ENCODE measurements at regions of chr16 and their contacts with region 1.

Region 1: DNA sequence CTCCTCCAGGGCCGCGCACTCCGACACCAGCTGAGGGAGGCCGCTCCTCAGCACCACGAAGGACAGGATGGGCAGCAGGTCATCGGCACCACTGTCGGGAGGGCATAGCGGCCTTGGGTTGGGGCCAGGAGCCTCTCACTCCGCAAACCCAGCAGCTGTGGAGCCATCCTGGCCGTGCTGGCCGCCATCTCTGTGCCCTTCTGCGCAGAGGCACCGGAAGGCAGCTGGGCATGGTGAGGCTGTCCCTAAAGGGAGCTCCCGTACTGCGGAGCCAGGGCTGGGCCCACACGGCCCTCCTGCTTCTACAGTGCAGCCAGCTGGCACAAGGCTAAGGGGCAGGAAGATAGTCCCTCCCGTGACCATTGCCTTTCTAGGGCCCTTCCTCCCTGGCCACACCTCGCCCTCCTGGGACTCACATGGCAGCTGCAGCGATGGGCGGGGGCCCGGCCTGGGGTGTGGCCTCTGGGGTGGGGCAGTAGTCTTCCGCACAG is 7.0 kb upstream of the SPATA2L start:
- DNase-seq: no peak
- H3K4me3 ChIP-seq: no peak overlapping the region
- H3K27ac ChIP-seq: no peak overlapping the region
- H3K4me1 ChIP-seq: peaks cover 13 to 31% (median 21%) of the 10 kb centered on the region in 4 donors
- H3K27me3 ChIP-seq: peaks cover 0 to 21% (median 7%) of the 10 kb centered on the region in 3 donors
- CTCF ChIP-seq: no peak
- EP300 ChIP-seq: no peak
- POLR2A ChIP-seq: no peak

Region 2: DNA sequence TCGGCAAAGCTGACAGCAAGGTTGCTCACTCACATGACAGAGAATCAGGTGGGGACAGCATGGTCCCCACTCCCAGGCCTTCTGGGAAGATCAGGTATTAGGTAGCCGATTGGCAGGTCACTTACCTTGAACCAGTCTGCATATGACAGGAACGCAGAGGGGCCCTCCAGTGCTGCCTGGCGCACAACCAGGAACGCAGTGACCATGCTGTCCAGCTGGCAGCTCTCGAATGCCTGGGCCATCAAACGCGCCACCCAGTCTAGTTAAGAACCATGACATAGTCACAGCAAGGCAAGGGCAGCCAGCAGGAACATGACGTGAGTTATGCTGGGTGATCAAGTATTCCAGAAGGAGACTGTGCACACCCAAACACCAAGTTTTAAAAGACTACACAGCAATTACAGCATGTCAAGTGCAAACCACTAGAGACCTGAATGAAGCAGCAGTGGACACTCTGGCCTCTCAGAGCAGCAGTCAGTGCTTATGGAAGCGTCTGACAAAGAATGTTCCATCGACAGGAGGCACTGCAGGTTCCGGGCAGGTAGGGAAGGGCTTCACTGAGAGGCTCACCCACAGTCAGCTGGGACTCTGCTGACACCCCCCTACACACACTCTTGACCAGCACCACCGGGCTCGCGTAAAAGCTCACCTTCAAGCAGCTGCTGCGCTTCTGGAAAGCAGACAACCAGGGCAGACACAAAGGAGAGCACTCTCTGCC is 83.0 kb after region 1 on chr16:
- intact Hi-C with region 1: loop called (anchors 5 kb)
- DNase-seq: no peak
- H3K4me3 ChIP-seq: no peak overlapping the region
- H3K27ac ChIP-seq: no peak overlapping the region
- H3K4me1 ChIP-seq: no peaks in the 10 kb centered on the region
- H3K27me3 ChIP-seq: no peaks in the 10 kb centered on the region
- CTCF ChIP-seq: no peak
- EP300 ChIP-seq: no peak
- POLR2A ChIP-seq: no peak

Region 3: GRCh38 chr16:89880477-89881367 is 172.2 kb after region 1 on chr16:
- intact Hi-C with region 1: no loop called
- DNase-seq: no peak
- H3K4me3 ChIP-seq: no peak overlapping the region
- H3K27ac ChIP-seq: no peak overlapping the region
- H3K4me1 ChIP-seq: peaks cover 0 to 22% (median 9%) of the 10 kb centered on the region in 4 donors
- H3K27me3 ChIP-seq: no peaks in the 10 kb centered on the region
- CTCF ChIP-seq: no peak
- EP300 ChIP-seq: no peak
- POLR2A ChIP-seq: no peak